AG04450 (cell line): ENCODE measurements at regions of chr3 and their contacts with region 1.

Region 1: DNA sequence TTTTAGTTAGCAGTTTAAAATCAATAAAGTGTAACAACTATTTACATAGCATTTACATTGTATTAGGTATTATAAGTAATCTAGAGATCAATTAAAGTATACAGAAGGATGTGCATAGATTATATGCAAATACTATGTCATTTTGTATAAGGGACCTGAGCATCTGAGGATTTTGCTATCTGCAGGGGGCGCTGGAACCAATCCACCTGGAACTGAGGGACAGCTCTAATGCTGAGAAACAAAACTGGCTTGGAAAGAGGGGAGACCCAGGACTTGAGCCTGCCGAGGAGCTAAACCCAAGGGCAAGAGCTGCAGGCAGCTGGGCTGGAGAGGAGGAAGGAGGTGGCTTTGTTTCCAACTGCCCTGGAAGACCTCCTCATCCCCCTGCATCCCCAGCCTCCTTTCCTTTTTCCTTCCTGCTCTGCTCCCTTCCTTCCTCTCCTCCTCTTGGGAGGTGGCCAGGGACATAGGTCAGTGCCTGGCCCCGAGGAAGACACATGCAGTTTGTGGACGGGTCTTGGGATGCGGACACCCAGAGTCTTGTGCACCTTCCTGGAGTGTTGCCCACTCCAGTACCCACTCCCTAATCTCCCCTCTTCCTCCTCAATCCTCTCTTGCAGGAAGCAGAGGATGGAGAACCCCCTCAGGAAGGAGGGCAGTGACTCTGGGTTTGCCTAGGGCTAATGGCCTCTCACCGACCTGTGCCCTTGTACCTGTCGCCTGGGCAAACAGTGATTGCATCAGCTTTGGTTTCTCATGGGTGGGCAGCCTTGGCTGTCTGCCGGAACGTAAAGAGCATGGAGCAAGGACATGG is 828 bp upstream of the RTP3 start:
- DNase-seq: no peak
- H3K4me3 ChIP-seq: no peak overlapping the region
- H3K27ac ChIP-seq: peak overlapping the region; percentile 21
- H3K27me3 ChIP-seq: no peaks in the 10 kb centered on the region
- CTCF ChIP-seq: peak; percentile 48

Region 2: DNA sequence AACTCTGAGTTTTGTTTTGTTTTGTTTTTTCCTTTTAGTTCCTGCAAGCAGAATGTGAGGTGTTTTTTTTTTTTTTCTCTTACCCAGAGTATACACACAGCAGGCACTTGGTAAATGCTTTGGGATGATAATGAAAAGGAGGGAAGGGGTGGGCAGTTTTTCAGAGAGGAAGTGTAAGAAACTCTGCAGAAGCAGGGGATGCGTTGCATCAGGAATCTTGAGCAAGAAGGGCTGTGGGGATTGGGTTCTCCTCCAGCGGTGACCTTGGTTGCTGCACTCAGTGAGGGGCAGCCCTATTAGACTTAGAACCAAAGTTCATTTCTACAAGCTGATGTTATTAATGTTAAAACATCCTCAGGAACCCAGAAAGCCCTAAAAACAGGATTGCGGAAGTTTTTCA is 1238.6 kb before region 1 on chr3:
- CTCF ChIA-PET with region 1: no interaction called
- POLR2A ChIA-PET with region 1: no interaction called
- DNase-seq: no peak
- H3K4me3 ChIP-seq: no peak overlapping the region
- H3K27ac ChIP-seq: no peak overlapping the region
- H3K27me3 ChIP-seq: no peaks in the 10 kb centered on the region
- CTCF ChIP-seq: no peak

Region 3: GRCh38 chr3:46228259-46229242 is 268.4 kb before region 1 on chr3:
- CTCF ChIA-PET with region 1: no interaction called
- POLR2A ChIA-PET with region 1: no interaction called
- DNase-seq: no peak
- H3K4me3 ChIP-seq: no peak overlapping the region
- H3K27ac ChIP-seq: no peak overlapping the region
- H3K27me3 ChIP-seq: peaks cover 5% of the 10 kb centered on the region
- CTCF ChIP-seq: no peak

Region 4: DNA sequence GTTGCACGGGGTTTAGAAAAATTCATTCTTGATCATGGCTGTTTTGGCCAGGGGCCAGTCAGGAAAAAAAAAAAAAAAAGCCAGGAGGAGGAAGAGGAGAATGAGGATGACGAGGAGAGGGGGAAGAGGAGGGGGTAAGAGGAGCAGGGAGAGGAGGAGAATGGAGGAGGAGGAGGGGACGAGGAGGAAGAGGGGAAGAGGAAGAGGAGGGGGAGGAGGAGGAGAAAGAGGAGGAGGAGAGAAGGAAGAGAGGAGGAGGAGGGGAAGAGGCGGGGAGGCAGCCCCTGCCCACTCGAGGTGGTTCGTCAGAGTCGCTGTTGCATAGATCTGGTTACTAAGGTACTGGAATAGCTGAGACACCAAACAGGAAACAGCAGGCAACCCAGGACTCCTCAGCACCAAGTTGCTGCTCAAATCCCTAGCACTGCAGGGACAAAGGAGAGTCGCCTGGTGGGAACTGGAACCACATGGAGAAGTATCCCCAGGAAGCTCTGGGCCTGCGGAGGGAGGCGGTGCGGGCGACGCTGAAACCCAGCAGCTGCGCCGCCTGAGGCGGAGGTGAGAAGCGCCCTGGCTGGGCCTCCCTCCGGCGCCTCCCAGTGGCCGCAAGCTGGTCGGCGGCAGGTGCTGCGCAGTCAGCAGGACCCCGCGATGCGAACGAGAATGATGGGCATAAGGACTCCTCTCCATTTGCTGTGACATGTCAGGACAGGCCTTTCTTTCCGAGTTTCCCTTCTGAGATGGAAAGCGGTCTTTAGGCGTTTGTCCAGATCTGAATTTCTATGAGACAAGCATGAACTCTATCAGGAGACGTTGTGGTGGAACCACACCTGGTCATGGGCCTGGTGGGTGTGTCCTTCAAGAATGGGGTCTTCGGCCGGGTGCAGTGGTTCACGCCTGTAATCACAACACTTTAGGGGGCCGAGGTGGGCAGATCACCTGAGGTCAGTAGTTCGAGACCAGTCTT is 132.9 kb after region 1 on chr3:
- CTCF ChIA-PET with region 1: interaction called, 12 read pairs
- POLR2A ChIA-PET with region 1: interaction called, 9 read pairs
- DNase-seq: peak; percentile 30
- H3K4me3 ChIP-seq: peak overlapping the region; percentile 49
- H3K27ac ChIP-seq: no peak overlapping the region
- H3K27me3 ChIP-seq: peaks cover 2% of the 10 kb centered on the region
- CTCF ChIP-seq: peak; percentile 99